ENCODE measurements at regions of chr12 and their contacts with region 1.

Region 1: GRCh38 chr12:123365025-123365917 is 624 bp upstream of the SBNO1 start:
- DNase-seq: peak; percentile 95 to 100 (median 97)
- ATAC-seq: peak; percentile 74
- H3K4me3 ChIP-seq: peak overlapping the region; percentile 69 to 79
- H3K4me3 Mint-ChIP-seq: peak overlapping the region; percentile 90
- H3K27ac ChIP-seq: peak overlapping the region; percentile 87 to 93
- H3K27ac Mint-ChIP-seq: peak overlapping the region; percentile 92
- H3K4me1 ChIP-seq: peaks cover 18% of the 10 kb centered on the region
- H3K4me1 Mint-ChIP-seq: peaks cover 24% of the 10 kb centered on the region
- H3K27me3 ChIP-seq: no peaks in the 10 kb centered on the region
- H3K27me3 Mint-ChIP-seq: no peaks in the 10 kb centered on the region
- CTCF ChIP-seq: peak; percentile 93

Region 2: DNA sequence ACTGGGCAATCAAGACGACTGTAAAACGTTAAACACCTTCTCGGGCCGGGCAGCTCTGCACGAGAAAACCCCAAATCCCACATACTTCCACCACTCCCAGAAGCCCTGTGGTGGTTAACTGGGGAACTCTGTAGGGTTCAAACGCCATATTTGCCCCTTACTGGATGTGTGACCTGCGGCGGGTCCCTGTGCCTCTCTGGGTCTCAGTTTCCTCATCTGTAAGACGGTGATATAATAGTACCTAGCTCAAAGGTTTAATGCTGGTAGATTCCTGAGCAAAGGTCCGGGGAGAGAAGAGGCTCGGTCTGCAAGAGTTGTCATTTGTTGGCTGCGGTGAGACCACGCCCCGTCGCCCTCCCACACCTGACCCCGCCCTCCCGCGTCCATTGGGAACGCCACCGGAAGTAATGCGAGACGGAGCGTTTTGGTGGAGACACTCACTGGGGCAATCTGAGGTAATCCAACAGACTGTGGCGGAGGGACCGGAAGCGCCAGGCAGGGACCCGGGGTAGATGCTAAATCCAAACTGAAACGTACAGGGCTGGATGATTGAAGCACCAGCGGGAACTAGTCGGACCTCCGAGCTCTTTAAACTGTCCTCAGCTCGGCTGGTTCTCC is 390.9 kb before region 1 on chr12:
- CTCF ChIA-PET with region 1: no interaction called
- POLR2A ChIA-PET with region 1: no interaction called
- intact Hi-C with region 1: loop called (anchors 1 to 2 kb)
- DNase-seq: peak; percentile 97 to 100 (median 99)
- ATAC-seq: peak; percentile 85
- H3K4me3 ChIP-seq: peak overlapping the region; percentile 91 to 93
- H3K4me3 Mint-ChIP-seq: peak overlapping the region; percentile 98
- H3K27ac ChIP-seq: peak overlapping the region; percentile 93 to 97
- H3K27ac Mint-ChIP-seq: peak overlapping the region; percentile 98
- H3K4me1 ChIP-seq: peaks cover 26% of the 10 kb centered on the region
- H3K4me1 Mint-ChIP-seq: peaks cover 31% of the 10 kb centered on the region
- H3K27me3 ChIP-seq: no peaks in the 10 kb centered on the region
- H3K27me3 Mint-ChIP-seq: no peaks in the 10 kb centered on the region
- CTCF ChIP-seq: no peak

Region 3: GRCh38 chr12:123388177-123388947 is 23.1 kb after region 1 on chr12:
- CTCF ChIA-PET with region 1: interaction called, 16 read pairs
- POLR2A ChIA-PET with region 1: interaction called, 26 read pairs
- intact Hi-C with region 1: loop called (anchors 1 kb)
- DNase-seq: peak; percentile 41 to 88 (median 72)
- ATAC-seq: peak; percentile 66
- H3K4me3 ChIP-seq: peak overlapping the region; percentile 42 to 64
- H3K4me3 Mint-ChIP-seq: peak overlapping the region; percentile 88
- H3K27ac ChIP-seq: peak overlapping the region; percentile 33 to 79
- H3K27ac Mint-ChIP-seq: peak overlapping the region; percentile 91
- H3K4me1 ChIP-seq: peaks cover 22% of the 10 kb centered on the region
- H3K4me1 Mint-ChIP-seq: peaks cover 32% of the 10 kb centered on the region
- H3K27me3 ChIP-seq: no peaks in the 10 kb centered on the region
- H3K27me3 Mint-ChIP-seq: no peaks in the 10 kb centered on the region
- CTCF ChIP-seq: no peak

Region 4: GRCh38 chr12:123533672-123534643 is 168.7 kb after region 1 on chr12 and contains the start of gene RILPL1:
- CTCF ChIA-PET with region 1: no interaction called
- POLR2A ChIA-PET with region 1: interaction called, 5 read pairs
- intact Hi-C with region 1: loop called in 1 of 2 experiments (anchors 1 kb)
- DNase-seq: peak; percentile 7 to 71 (median 43)
- ATAC-seq: peak; percentile 82
- H3K4me3 ChIP-seq: peak within 1 kb of the TSS; percentile 61 to 68
- H3K4me3 Mint-ChIP-seq: peak within 1 kb of the TSS; percentile 89
- H3K27ac ChIP-seq: no peak within 1 kb of the TSS
- H3K27ac Mint-ChIP-seq: peak within 1 kb of the TSS; percentile 74
- H3K4me1 ChIP-seq: peaks cover 19% of the 10 kb centered on the region
- H3K4me1 Mint-ChIP-seq: peaks cover 17% of the 10 kb centered on the region
- H3K27me3 ChIP-seq: no peaks in the 10 kb centered on the region
- H3K27me3 Mint-ChIP-seq: no peaks in the 10 kb centered on the region
- CTCF ChIP-seq: peak; percentile 27
- total RNA-seq, gene RILPL1: 3.1 to 3.4 TPM

Region 5: GRCh38 chr12:123633379-123634141 is 268.3 kb after region 1 on chr12 and contains the starts of genes EIF2B1 and GTF2H3:
- CTCF ChIA-PET with region 1: no interaction called
- POLR2A ChIA-PET with region 1: no interaction called
- intact Hi-C with region 1: loop called (anchors 1 kb)
- DNase-seq: peak; percentile 88 to 99 (median 97)
- ATAC-seq: peak; percentile 94
- H3K4me3 ChIP-seq: peak within 1 kb of the TSS; percentile 77 to 79
- H3K4me3 Mint-ChIP-seq: peak within 1 kb of the TSS; percentile 92
- H3K27ac ChIP-seq: peak within 1 kb of the TSS; percentile 90 to 93
- H3K27ac Mint-ChIP-seq: peak within 1 kb of the TSS; percentile 98
- H3K4me1 ChIP-seq: peaks cover 21% of the 10 kb centered on the region
- H3K4me1 Mint-ChIP-seq: peaks cover 42% of the 10 kb centered on the region
- H3K27me3 ChIP-seq: no peaks in the 10 kb centered on the region
- H3K27me3 Mint-ChIP-seq: no peaks in the 10 kb centered on the region
- CTCF ChIP-seq: no peak
- total RNA-seq, gene EIF2B1: 35.9 to 40.0 TPM
- total RNA-seq, gene GTF2H3: 11.8 to 15.2 TPM